ENCODE measurements at regions of chr12 and their contacts with region 1.

Region 1: GRCh38 chr12:120317224-120318105 is 10.1 kb downstream of the PLA2G1B start:
- DNase-seq: peak; percentile 99 to 100
- ATAC-seq: peak; percentile 99
- H3K4me3 ChIP-seq: peak overlapping the region; percentile 67 to 81 (median 73)
- H3K27ac ChIP-seq: peak overlapping the region; percentile 92 to 96 (median 94)
- H3K4me1 ChIP-seq: peaks cover 3 to 7% of the 10 kb centered on the region in 2 donors
- H3K27me3 ChIP-seq: no peaks in the 10 kb centered on the region
- CTCF ChIP-seq: peak; percentile 55 to 70 (median 62)
- POLR2A ChIP-seq: peak; percentile 78 to 86

Region 2: DNA sequence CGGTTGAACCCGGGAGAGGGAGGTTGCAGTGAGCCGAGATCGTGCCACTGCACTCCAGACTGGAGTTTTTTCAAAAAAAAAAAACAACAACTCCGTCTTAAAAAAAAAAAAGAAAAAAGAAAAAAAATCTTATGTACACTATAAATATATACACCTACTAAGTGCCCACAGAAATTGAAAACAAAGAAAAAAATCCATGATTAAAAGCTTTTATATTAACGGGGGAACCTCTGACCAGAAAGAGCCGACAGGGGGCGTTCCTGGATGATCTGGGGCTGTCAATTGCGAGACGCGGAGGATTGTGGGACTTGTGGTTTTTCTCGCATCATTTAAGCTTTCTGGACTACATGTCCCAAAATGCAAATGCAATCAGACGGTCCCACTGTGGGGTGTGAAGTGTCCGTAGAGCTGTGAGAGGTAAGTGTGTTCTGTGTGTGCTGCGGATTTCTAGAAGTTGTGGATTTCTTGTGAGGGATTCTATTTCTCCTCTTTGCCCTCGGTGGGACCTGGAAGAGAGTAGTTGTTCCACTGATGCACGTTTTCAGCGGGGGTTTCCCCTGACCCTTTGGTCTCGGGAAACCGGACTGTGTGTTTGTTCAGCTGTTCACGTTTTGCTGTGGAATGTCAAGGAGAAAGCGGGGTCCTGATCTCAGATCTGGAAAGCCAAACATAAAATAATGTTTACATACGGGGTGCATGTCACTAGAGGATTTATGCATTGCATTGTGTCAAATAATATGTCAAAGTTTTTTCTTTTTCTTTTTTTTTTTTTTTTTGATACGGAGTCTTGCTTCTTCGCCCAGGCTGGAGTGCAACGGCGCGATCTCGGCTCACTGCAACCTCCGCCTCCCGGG is 15.3 kb before region 1 on chr12 and contains the start of gene SIRT4:
- in situ Hi-C with region 1: no loop called
- intact Hi-C with region 1: loop called (anchors 1 kb)
- DNase-seq: peak; percentile 85 to 89
- ATAC-seq: peak; percentile 100
- H3K4me3 ChIP-seq: peak within 1 kb of the TSS; percentile 77 to 94 (median 83)
- H3K27ac ChIP-seq: peak within 1 kb of the TSS; percentile 81 to 93 (median 88)
- H3K4me1 ChIP-seq: peaks cover 8 to 10% of the 10 kb centered on the region in 2 donors
- H3K27me3 ChIP-seq: no peaks in the 10 kb centered on the region
- CTCF ChIP-seq: peak; percentile 60 to 84 (median 68)
- POLR2A ChIP-seq: peak in 1 of 2 donors; percentile 48
- total RNA-seq, gene SIRT4: 2.5 to 13.2 (median 6.7) TPM

Region 3: DNA sequence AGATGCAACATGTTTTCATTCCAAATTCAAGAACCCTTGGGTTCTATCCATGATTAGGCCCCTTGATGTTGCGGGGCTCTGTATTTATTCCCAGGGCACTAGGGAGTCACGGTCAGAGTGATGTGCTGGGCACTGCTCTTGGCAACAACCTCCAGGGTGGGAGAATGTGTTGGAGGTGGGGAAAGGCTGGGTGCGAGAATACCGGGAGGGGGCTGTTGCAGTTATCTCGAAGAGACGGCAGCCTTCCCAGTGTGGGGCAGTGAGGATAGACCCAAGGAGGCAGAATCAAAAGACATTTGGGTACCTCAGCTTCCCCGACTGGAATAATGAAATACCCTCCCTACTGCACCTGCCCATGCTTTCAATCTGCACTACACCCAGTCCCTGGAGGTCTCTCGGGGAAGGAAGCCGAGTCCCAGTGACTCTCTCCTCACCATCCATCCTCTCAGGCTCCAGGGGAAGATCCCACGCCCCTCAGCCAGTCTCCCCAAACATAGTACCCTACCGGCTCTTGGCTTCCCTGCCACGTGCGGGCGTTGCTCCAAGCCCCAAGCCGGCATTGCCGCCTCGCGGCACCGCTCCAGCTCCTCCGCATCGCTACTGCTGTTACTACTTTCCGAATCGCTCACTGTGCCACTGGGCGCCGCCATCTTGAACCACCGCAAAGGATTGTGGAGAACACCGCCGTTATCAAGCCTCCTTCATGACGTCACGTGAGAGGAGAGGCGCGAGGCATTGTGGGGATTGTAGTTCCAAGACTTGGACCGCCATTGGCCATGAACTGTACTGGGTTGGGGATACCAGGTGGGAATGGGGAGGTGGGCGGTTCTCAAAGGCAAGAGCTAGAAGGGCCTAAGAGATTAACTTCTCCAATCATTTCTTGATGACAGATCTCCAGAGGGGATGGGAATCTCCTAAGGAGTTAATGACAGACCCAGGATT is 698.6 kb after region 1 on chr12 and contains the start of gene C12orf43:
- in situ Hi-C with region 1: no loop called
- intact Hi-C with region 1: loop called (anchors 10 kb)
- DNase-seq: peak; percentile 80 to 88
- ATAC-seq: peak; percentile 100
- H3K4me3 ChIP-seq: peak within 1 kb of the TSS; percentile 85 to 95 (median 88)
- H3K27ac ChIP-seq: peak within 1 kb of the TSS; percentile 76 to 85 (median 82)
- H3K4me1 ChIP-seq: peaks cover 9 to 10% of the 10 kb centered on the region in 2 donors
- H3K27me3 ChIP-seq: no peaks in the 10 kb centered on the region
- CTCF ChIP-seq: no peak
- POLR2A ChIP-seq: no peak
- total RNA-seq, gene C12orf43: 2.9 to 13.2 (median 5.1) TPM

Measured in gastrocnemius medialis (tissue), 4 donors.